ENCODE measurements at regions of chr12 and their contacts with region 1.

Region 1: GRCh38 chr12:6533923-6534694 is at the start of gene GAPDH:
- H3K4me3 ChIP-seq: peak within 1 kb of the TSS; percentile 73
- H3K27ac ChIP-seq: peak within 1 kb of the TSS; percentile 93
- H3K4me1 ChIP-seq: peaks cover 12% of the 10 kb centered on the region
- CTCF ChIP-seq: no peak

Region 2: DNA sequence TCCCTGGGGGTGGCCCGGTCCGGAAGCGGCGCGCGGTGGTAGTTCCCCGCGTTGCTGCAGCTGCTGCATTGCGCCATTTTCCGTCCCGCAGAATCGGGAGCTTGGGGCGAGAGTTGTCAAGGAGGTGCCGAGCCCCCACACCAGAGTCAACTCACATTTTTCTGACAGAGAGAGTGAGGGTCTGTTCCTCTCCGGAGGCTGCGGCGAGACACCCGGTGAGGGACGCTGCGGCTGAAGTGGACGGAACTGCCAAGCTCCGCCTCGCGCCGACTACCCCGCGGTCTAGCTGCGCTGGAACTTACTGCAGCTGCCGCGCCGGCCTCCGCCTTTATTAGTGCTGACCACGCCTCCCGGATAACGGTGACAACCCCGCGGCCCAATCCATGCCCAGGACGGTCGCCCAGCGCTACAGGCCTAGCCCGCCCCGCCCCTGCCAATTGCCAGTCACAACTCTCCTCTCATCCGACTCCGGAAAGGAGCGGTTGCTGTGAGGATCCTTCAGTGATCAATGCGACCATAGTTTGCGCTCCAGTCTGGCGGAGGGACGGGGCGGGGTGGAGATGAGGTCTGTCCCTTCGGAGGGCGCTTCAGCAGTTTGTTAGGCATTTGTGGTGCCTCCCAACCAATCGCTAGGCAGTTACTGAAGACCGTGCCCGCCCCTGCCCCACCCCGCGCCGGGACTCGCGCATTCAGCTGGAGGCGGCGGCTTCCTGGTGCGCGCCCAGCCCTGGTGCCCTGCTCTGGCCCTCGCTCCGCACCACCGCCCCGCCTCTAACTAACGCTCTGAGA is 63.5 kb before region 1 on chr12 and contains the start of gene VAMP1:
- CTCF ChIA-PET with region 1: interaction called, 13 read pairs
- POLR2A ChIA-PET with region 1: interaction called, 50 read pairs
- H3K4me3 ChIP-seq: peak within 1 kb of the TSS; percentile 81
- H3K27ac ChIP-seq: peak within 1 kb of the TSS; percentile 35
- H3K4me1 ChIP-seq: peaks cover 2% of the 10 kb centered on the region; the same call in 1 of the 2 replicates
- CTCF ChIP-seq: peak; percentile 42

Region 3: DNA sequence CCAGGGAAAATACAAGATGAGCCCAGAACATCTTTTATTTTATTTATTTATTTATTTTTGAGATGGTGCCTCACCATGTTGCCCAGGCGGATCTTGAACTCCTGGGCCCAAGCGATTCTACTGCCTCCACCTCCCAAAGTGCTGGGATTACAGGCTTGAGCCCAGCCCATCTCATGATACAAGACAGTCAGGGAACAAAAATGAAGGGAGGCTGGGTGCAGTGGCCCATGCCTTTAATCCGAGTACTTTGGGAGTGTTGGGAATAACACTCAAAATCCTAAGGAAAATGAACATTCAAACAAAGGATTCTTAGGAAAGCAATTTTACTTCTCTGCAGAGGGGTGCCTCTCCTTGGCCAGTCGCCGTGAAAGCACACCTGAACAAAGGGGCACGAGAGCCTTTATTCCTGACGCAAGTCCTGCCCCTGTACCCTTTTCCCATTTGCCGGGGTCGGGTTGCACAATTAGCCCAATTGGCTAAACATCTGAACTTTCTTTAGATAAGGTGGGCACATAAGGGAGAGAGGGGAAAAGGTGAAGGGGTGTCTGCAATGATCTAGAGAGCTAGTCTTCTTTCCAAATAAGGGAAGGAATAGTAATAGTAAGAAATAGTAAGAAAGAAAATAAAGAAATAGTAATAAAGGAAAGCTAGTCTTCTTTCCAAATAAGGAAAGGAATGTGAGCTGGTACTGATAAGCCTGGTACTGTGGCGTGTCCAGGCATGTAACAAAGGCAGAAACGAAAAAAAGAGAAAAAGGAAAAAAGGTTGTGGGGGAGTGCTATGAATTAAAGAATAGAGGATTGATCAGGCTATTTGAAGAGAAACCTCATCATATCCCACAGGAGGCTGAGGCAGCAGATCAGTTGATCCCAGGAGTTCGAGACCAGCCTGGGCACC is 26.8 kb before region 1 on chr12:
- CTCF ChIA-PET with region 1: interaction called, 4 read pairs
- POLR2A ChIA-PET with region 1: interaction called, 36 read pairs
- H3K4me3 ChIP-seq: no peak overlapping the region
- H3K27ac ChIP-seq: peak overlapping the region; percentile 39
- H3K4me1 ChIP-seq: peaks cover 4% of the 10 kb centered on the region; the same call in 1 of the 2 replicates
- CTCF ChIP-seq: no peak

Region 4: GRCh38 chr12:6563448-6564050 is 29.4 kb after region 1 on chr12:
- CTCF ChIA-PET with region 1: interaction called, 7 read pairs
- POLR2A ChIA-PET with region 1: interaction called, 25 read pairs
- H3K4me3 ChIP-seq: no peak overlapping the region
- H3K27ac ChIP-seq: no peak overlapping the region
- H3K4me1 ChIP-seq: no peaks in the 10 kb centered on the region
- CTCF ChIP-seq: peak; percentile 76; the same call in 1 of the 2 replicates

Region 5: GRCh38 chr12:6723607-6724396 is 189.7 kb after region 1 on chr12 and contains the start of gene COPS7A:
- CTCF ChIA-PET with region 1: no interaction called
- POLR2A ChIA-PET with region 1: interaction called, 10 read pairs
- H3K4me3 ChIP-seq: peak within 1 kb of the TSS; percentile 58
- H3K27ac ChIP-seq: peak within 1 kb of the TSS; percentile 81
- H3K4me1 ChIP-seq: peaks cover 11% of the 10 kb centered on the region
- CTCF ChIP-seq: peak; percentile 63; the same call in 1 of the 2 replicates